Posterior vena cava (tissue), 2 donors: ENCODE measurements at regions of chr14 and their contacts with region 1.

Region 1: DNA sequence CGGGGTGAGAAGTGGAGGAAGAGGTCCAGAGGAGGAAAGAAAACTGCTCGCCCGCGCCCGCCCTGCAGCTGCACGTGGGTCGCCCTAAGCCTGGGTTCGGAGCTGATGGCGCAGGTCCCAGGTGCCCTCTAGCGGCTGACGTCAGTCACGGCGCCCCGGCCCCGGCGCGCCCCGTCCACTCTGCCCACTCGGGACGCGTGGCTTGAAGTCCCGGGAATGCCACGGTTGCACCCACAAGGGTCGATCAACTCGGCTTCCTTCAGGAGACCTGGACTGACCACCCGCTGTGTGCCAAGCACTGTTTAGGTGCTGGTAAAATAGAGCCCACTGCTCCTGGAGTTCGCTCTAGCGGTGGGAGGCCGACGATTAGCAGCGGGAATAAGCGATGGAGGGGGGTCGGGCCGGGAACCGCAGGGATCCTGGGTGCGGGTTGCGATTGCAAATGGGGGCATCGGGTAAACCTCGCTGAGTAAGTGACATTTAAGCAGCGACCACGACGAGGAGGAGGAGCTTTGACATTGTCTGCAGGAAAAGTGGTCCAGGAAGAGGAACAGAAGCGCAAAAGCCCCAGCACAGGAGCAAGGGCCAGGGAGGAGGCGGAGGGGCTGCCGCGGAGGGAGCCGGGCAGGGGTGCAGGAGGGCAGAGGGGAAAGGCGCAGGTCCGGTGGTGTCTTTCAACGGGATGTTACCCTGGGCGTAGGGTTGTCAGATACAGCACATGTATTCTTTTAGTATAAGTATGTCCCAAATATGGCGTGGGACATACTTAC is 5.1 kb upstream of the ZNF839 start:
- DNase-seq: peak; percentile 96

Region 2: GRCh38 chr14:102234331-102235264 is 79.8 kb before region 1 on chr14:
- intact Hi-C with region 1: loop called (anchors 5 kb)
- DNase-seq: peak; percentile 56